Mammary epithelial cell (primary cell): ENCODE measurements at regions of chr1 and their contacts with region 1.

Region 1: DNA sequence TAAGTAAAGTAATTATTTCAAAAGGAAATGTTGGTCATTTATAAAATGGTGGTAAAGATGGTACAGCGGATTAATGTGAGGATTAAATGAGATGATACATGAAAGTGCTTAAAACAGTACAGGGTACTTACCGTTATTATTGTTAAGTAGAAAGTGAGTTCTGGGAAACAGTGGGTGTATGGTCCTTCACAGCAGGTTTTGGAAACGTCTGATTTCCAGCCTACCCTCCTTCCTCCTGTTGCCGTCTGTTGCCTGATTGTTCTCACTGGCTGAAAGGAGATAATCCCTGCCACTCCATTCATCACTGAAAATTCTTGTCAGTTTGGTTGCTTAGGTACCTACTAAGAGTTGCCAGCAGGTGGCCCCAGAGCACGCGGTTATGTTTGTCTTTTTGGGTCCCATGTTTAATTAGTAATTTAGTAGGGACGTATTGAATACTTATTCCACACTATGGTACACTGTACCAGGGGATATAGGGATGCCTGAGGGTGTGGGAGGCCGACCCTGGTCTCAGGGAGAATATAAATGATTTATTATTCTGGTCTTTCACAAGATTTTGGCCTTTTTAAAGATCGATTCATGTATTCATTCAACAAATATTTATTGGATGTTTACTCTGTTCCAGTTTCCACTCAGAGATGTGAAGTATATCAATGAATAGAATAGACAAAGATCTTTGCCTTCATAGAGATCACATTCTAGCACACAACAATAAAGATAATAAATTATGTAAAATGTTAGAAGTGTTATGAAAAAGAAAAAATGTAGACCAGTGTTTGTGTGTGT is 30.8 kb upstream of the RPTN start:
- DNase-seq: peak; percentile 66
- H3K4me3 ChIP-seq: peak overlapping the region in 1 of 3 experiments; percentile 41
- H3K27ac ChIP-seq: no peak overlapping the region
- H3K4me1 ChIP-seq: peaks cover 49% of the 10 kb centered on the region
- H3K27me3 ChIP-seq: no peaks in the 10 kb centered on the region
- CTCF ChIP-seq: peak; percentile 81 to 84

Region 2: DNA sequence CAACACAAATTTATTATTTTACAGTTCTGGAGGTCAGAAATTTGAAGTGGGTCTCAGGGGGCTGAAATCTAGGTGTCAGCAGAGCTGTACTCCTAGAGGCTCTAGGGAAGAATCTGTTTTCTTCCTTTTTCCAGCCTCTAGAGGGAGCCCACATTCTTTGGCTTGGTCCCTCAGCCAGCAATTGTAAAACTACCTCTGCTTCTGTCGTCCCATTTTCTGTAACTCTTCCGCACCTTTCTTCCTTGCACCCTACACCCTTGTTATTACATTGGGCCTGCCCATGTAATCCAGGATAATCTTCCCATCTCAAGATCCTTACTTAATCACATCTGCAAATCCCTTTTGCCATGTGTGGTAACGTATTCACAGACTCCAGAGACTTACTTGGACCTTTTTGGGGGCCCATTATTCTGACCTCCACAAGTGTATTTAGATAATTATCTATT is 255.8 kb before region 1 on chr1:
- CTCF ChIA-PET with region 1: no interaction called
- dilution Hi-C with region 1: no loop called
- in situ Hi-C with region 1: no loop called
- intact Hi-C with region 1: loop called (anchors 1 kb)
- DNase-seq: peak; percentile 57
- H3K4me3 ChIP-seq: no peak overlapping the region
- H3K27ac ChIP-seq: peak overlapping the region; percentile 4
- H3K4me1 ChIP-seq: no peaks in the 10 kb centered on the region
- H3K27me3 ChIP-seq: no peaks in the 10 kb centered on the region
- CTCF ChIP-seq: peak; percentile 85 to 95

Region 3: DNA sequence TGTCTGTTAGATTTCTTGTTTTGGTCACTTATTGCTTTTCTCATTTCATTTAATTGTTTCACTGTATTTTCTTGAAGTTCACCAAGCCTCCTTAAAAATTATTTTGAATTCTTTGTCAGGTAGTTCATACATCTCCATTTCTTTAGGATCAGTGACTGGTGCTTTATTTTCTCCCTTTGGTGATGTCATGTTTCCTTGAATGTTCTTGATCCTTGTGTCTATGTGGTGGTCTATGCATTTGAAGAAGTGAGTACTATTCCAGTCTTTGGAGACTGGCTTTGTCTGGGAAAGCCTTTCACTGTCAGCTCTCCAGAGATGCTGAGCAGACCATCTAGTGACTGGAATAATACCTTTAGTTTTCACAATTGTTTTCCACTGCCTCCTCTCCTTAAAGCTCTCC is 92.2 kb before region 1 on chr1:
- CTCF ChIA-PET with region 1: no interaction called
- dilution Hi-C with region 1: no loop called
- in situ Hi-C with region 1: no loop called
- intact Hi-C with region 1: no loop called
- DNase-seq: no peak
- H3K4me3 ChIP-seq: no peak overlapping the region
- H3K27ac ChIP-seq: no peak overlapping the region
- H3K4me1 ChIP-seq: no peaks in the 10 kb centered on the region
- H3K27me3 ChIP-seq: peaks cover 8% of the 10 kb centered on the region
- CTCF ChIP-seq: no peak

Region 4: DNA sequence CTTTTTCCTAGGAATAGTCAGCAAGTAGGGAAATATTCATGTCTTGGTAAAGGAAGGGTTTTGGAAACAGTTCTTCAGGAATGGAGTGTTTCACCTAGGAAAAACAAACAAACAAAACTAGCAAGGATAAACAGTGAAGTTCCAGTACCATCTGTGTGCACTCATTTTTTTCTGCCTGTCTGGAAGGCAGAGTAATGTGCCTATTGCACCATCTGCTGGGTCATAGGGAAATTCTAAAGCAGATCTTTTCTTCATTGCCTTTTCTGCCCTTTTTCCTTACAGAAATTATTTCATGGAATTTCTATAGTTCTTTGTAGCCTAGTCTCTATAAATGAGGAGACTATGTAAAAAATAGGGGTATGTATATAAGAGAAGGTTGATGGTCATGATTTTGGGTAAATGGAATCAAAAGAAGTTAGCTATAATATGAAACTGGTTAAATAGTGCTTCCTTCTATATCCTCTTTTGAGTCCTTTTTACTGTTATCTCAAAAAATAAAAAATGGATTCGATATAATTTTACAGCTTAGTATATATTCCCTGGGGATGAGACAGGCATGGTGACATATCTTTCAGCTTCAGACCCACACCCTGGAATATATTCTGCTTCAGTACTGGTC is 37.6 kb after region 1 on chr1:
- CTCF ChIA-PET with region 1: no interaction called
- dilution Hi-C with region 1: no loop called
- in situ Hi-C with region 1: loop called in 1 of 2 experiments (anchors 5 kb)
- intact Hi-C with region 1: loop called (anchors 1 kb)
- DNase-seq: peak; percentile 42
- H3K4me3 ChIP-seq: no peak overlapping the region
- H3K27ac ChIP-seq: no peak overlapping the region
- H3K4me1 ChIP-seq: peaks cover 34% of the 10 kb centered on the region
- H3K27me3 ChIP-seq: no peaks in the 10 kb centered on the region
- CTCF ChIP-seq: peak; percentile 7 to 41

Region 5: DNA sequence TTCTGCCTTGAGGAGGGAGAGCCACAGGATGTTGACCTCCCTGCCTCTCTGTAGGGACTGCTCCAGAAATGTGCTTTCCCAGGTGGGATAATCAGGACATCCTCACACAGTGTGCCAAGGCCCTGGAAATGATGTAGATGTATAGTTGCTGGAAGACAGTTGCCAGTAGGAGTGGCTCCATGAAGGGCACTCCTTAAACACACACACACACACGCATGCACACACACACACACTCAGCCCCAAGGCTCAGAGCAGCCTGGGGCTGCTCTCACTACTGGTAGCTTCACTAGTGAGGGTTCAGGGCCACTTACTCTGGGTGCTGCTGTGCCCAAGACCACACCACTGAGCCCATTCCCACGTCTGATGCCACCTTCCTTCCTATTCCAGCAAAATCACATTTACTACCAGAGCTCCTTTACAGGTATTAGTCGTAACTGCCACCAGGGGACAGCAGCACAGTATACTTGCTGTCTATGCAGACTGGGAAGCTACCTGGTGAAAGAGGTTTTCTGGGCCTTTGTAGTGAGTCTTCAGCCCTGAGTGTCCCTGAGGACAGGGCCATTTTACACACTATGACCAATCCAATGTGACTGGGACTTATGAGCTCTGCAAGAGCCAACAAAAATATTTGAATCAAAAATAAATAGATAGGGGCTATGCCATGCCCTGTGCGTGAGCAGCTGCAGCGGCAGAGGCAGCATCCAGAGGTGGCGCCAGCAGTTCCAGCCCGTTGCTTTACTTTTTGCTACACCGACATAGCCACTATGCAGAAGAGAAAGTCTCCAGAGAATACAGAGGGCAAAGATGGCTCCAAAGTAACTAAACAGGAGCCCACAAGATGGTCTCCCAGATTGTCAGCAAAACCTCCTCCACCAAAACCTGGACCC is 209.2 kb after region 1 on chr1:
- CTCF ChIA-PET with region 1: no interaction called
- dilution Hi-C with region 1: no loop called
- in situ Hi-C with region 1: no loop called
- intact Hi-C with region 1: loop called (anchors 2 kb)
- DNase-seq: peak; percentile 59
- H3K4me3 ChIP-seq: no peak overlapping the region
- H3K27ac ChIP-seq: no peak overlapping the region
- H3K4me1 ChIP-seq: no peaks in the 10 kb centered on the region
- H3K27me3 ChIP-seq: peaks cover 27% of the 10 kb centered on the region
- CTCF ChIP-seq: peak; percentile 81 to 93

Region 6: GRCh38 chr1:152448095-152448494 is 258.2 kb after region 1 on chr1:
- CTCF ChIA-PET with region 1: no interaction called
- dilution Hi-C with region 1: no loop called
- in situ Hi-C with region 1: loop called (anchors 5 to 10 kb)
- intact Hi-C with region 1: no loop called
- DNase-seq: no peak
- H3K4me3 ChIP-seq: no peak overlapping the region
- H3K27ac ChIP-seq: no peak overlapping the region
- H3K4me1 ChIP-seq: peaks cover 6% of the 10 kb centered on the region
- H3K27me3 ChIP-seq: peaks cover 4% of the 10 kb centered on the region
- CTCF ChIP-seq: no peak

Region 7: DNA sequence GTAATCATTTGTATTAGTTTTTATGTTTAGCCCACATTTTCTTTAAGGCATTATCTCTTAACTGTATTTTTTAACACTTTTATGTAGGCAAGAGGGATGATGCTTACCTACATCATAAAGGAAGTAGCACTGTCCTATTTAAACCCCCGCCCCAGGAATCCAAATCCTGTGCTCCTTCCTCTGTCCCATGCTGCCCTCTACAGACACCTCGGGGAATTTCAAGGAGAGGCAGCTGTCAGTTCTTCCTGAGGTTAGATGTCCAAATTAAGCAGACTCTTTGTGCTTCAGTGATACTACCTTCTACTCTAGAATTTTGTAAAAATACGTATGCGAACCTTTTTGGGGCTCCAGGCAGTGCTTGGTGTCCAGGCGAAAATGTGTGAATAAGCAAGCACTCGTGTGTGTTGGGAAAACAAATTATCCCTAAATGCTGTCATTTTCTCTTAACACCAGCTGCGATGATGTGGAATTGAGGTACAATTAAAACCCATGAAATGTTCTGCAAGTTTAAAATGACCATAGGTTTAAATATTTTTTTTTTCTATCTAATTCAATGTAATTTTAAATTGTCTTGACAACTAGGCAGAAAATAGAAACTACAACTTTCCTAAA is 343.6 kb after region 1 on chr1:
- CTCF ChIA-PET with region 1: no interaction called
- dilution Hi-C with region 1: no loop called
- in situ Hi-C with region 1: no loop called
- intact Hi-C with region 1: loop called (anchors 5 kb)
- DNase-seq: peak; percentile 50
- H3K4me3 ChIP-seq: no peak overlapping the region
- H3K27ac ChIP-seq: no peak overlapping the region
- H3K4me1 ChIP-seq: no peaks in the 10 kb centered on the region
- H3K27me3 ChIP-seq: no peaks in the 10 kb centered on the region
- CTCF ChIP-seq: peak; percentile 90 to 94